Activated CD8-positive, alpha-beta T cell treated with anti-CD3 and anti-CD28 coated beads for 36 hours (primary cell): ENCODE measurements at regions of chr1 and their contacts with region 1.

Region 1: DNA sequence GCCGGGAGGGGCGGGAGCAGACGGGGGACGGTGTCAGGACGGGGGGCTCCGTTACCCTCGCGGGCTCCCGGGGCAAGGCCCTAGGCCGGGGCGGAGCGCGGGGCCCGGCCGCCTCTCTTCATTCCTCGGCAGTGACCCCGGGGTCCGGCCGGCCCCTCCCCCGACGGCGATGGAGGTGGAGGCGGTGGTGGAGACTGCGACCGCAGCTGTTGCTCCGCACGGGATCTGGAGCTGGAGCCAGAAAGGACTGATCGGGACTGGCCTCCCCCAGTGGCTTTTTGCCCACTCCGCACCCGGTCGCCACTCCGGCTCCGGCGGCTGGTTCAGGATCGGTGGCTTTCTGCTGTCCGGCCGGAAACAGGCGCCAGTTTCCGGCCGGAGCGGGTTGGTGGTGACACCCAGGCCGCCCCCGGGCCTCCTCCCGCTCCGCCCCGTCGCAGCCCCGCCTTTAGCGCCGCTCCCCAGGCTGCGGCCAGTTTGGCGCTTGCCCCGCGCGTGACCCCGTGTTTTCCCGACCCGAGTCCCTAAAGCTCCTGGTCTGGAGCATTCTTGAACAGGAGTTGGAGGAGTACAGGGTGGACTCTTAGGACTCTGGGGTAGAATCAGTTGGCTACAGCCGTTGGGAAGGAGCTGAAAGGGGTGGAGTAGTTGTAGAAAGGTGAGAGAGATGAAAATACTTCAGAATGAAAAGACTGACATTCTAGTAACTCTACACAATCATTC is at the start of gene OTUD7B:
- DNase-seq: peak; percentile 80
- ATAC-seq: peak; percentile 84
- H3K4me3 Mint-ChIP-seq: peak within 1 kb of the TSS; percentile 96
- H3K27ac Mint-ChIP-seq: peak within 1 kb of the TSS; percentile 94
- H3K4me1 Mint-ChIP-seq: peaks cover 39% of the 10 kb centered on the region
- H3K27me3 Mint-ChIP-seq: no peaks in the 10 kb centered on the region
- CTCF ChIP-seq: no peak
- total RNA-seq, gene OTUD7B: 16.1 to 17.3 TPM

Region 2: GRCh38 chr1:149997585-149998262 is 12.8 kb before region 1 on chr1:
- CTCF ChIA-PET with region 1: interaction called, 5 read pairs
- POLR2A ChIA-PET with region 1: interaction called, 15 read pairs
- intact Hi-C with region 1: no loop called
- DNase-seq: peak; percentile 36
- ATAC-seq: peak; percentile 80
- H3K4me3 Mint-ChIP-seq: peak overlapping the region; percentile 13
- H3K27ac Mint-ChIP-seq: peak overlapping the region; percentile 18
- H3K4me1 Mint-ChIP-seq: peaks cover 66% of the 10 kb centered on the region
- H3K27me3 Mint-ChIP-seq: no peaks in the 10 kb centered on the region
- CTCF ChIP-seq: no peak

Region 3: GRCh38 chr1:150067184-150068036 is 56.9 kb after region 1 on chr1 and contains the start of gene VPS45:
- CTCF ChIA-PET with region 1: interaction called, 3 read pairs
- POLR2A ChIA-PET with region 1: interaction called, 13 read pairs
- intact Hi-C with region 1: no loop called
- DNase-seq: peak; percentile 94
- ATAC-seq: peak; percentile 97
- H3K4me3 Mint-ChIP-seq: peak within 1 kb of the TSS; percentile 96
- H3K27ac Mint-ChIP-seq: peak within 1 kb of the TSS; percentile 98
- H3K4me1 Mint-ChIP-seq: peaks cover 27% of the 10 kb centered on the region
- H3K27me3 Mint-ChIP-seq: no peaks in the 10 kb centered on the region
- CTCF ChIP-seq: no peak
- total RNA-seq, gene VPS45: 19.4 to 22.8 TPM